Panc1 (cell line): ENCODE measurements at regions of chr12 and their contacts with region 1.

Region 1: GRCh38 chr12:42589465-42590329 is at the start of gene PRICKLE1:
- DNase-seq: no peak
- ATAC-seq: peak; percentile 79
- H3K4me3 ChIP-seq: peak within 1 kb of the TSS; percentile 64 to 67
- H3K27ac ChIP-seq: peak within 1 kb of the TSS; percentile 77
- H3K4me1 ChIP-seq: peaks cover 19% of the 10 kb centered on the region
- H3K27me3 ChIP-seq: peaks cover 15% of the 10 kb centered on the region
- CTCF ChIP-seq: no peak
- total RNA-seq, gene PRICKLE1: 20.1 TPM

Region 2: GRCh38 chr12:42442308-42442759 is 147.4 kb before region 1 on chr12:
- CTCF ChIA-PET with region 1: no interaction called
- POLR2A ChIA-PET with region 1: no interaction called
- in situ Hi-C with region 1: no loop called
- intact Hi-C with region 1: no loop called
- DNase-seq: no peak
- ATAC-seq: no peak
- H3K4me3 ChIP-seq: no peak overlapping the region
- H3K27ac ChIP-seq: no peak overlapping the region
- H3K4me1 ChIP-seq: peaks cover 6% of the 10 kb centered on the region
- H3K27me3 ChIP-seq: no peaks in the 10 kb centered on the region
- CTCF ChIP-seq: no peak

Region 3: DNA sequence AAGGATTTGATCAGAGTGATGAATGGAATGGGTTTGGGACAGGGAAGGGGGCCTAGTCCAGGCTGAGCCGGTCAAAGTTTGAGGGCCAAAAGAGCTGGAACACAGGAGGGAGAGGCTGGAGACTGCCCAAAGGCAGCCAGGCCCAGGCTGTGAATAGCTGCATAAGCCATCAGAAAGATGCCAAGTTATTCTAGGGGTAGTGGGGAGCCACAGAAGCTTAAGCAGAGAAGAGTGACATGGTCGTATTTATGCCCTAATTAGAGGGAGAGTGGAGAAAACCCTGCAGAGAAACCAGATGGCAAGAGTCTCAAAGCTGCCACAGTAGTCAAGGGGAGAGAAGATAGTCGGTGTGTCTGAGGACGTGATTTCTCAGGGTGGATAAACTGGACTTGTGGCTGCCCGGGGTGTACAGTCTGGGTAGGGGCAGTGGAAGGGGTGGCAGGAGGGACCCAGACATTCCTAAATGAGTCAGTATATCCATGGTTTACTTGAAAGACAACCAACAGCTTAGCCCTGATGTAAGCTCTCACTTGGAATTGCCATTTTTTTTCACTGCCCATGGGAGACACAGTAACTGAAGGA is 99.3 kb before region 1 on chr12:
- CTCF ChIA-PET with region 1: no interaction called
- POLR2A ChIA-PET with region 1: no interaction called
- in situ Hi-C with region 1: no loop called
- intact Hi-C with region 1: no loop called
- DNase-seq: no peak
- ATAC-seq: no peak
- H3K4me3 ChIP-seq: no peak overlapping the region
- H3K27ac ChIP-seq: no peak overlapping the region
- H3K4me1 ChIP-seq: no peaks in the 10 kb centered on the region
- H3K27me3 ChIP-seq: peaks cover 5% of the 10 kb centered on the region; the same call in 1 of the 2 replicates
- CTCF ChIP-seq: no peak

Region 4: GRCh38 chr12:42608196-42608825 is 18.6 kb after region 1 on chr12:
- CTCF ChIA-PET with region 1: no interaction called
- POLR2A ChIA-PET with region 1: interaction called, 15 read pairs
- in situ Hi-C with region 1: no loop called
- intact Hi-C with region 1: no loop called
- DNase-seq: no peak
- ATAC-seq: no peak
- H3K4me3 ChIP-seq: no peak overlapping the region
- H3K27ac ChIP-seq: no peak overlapping the region
- H3K4me1 ChIP-seq: no peaks in the 10 kb centered on the region
- H3K27me3 ChIP-seq: no peaks in the 10 kb centered on the region
- CTCF ChIP-seq: no peak